ENCODE measurements at regions of chr7 and their contacts with region 1.

Region 1: GRCh38 chr7:27774717-27775328 is 34.9 kb downstream of the TAX1BP1 start:
- DNase-seq: no peak
- ATAC-seq: no peak

Region 2: GRCh38 chr7:27224983-27225934 is 549.6 kb before region 1 on chr7:
- intact Hi-C with region 1: no loop called
- DNase-seq: peak; percentile 35
- ATAC-seq: no peak

Region 3: GRCh38 chr7:27873981-27874957 is 99.4 kb after region 1 on chr7:
- intact Hi-C with region 1: no loop called
- DNase-seq: peak; percentile 75
- ATAC-seq: peak; percentile 92

Region 4: GRCh38 chr7:27921081-27921836 is 146.4 kb after region 1 on chr7:
- intact Hi-C with region 1: loop called (anchors 10 kb)
- DNase-seq: no peak
- ATAC-seq: peak; percentile 43

Region 5: GRCh38 chr7:29189743-29190201 is 1414.9 kb after region 1 on chr7:
- intact Hi-C with region 1: no loop called
- DNase-seq: peak; percentile 74
- ATAC-seq: peak; percentile 58